ENCODE measurements at regions of chr4 and their contacts with region 1.

Region 1: GRCh38 chr4:76430519-76431388 is 4.3 kb upstream of the SHROOM3 start:
- DNase-seq: peak; percentile 50
- ATAC-seq: peak; percentile 81
- H3K4me3 ChIP-seq: peak overlapping the region in 1 of 2 experiments; percentile 41; a peak in 2 of 4 replicates
- H3K27ac ChIP-seq: no peak overlapping the region
- H3K4me1 ChIP-seq: peaks cover 0 to 9% of the 10 kb centered on the region in 2 experiments; a peak in 1 of 4 replicates
- H3K27me3 ChIP-seq: no peaks in the 10 kb centered on the region
- CTCF ChIP-seq: peak; percentile 55 to 87 (median 77)
- POLR2A ChIP-seq: no peak
- RAD21 ChIP-seq: peak; percentile 87

Region 2: DNA sequence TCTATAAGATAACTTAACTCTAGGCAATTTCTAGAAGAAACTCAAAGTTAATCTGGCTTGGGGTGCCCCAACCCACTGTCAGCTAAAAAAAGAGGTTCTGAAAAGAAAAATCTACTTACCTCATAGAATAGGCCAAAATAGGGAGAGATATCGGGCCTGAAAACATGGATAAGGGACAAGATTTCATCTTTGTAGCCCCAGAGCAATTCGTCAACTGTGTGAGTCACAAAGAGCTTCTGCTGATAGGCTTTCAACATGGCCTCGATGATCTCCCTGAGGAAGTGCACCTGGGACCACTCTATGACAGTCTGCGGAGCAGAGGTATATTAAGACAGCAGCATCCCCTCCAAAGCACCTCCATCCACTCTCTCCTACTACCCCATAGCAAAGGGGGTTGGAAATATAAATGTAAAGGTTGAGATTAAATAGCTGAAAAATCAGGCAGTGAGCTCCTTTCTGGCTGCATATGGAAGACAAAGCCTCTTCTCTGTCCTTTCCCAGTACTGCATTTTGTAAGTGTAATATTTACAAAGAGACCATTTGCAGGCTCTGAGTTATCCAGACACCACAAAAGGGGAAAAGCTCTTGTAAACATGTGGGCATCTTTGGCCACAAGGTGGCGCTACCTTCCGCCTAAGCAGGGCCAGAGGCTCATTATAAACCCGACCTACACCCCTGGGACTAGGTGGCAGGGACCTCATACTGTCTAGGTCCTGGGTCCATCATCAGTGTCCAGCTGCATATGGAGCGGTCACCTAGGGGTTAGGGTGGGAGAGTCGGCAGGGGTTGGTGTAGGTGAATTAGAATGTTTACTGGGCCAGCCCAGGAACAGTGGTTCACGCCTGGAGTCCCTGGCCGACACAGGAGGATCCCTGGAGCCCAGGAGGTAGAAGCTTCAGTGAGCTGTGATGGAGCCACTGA is 251.1 kb before region 1 on chr4:
- CTCF ChIA-PET with region 1: interaction called, 14 read pairs
- POLR2A ChIA-PET with region 1: no interaction called
- RAD21 ChIA-PET with region 1: no interaction called
- intact Hi-C with region 1: no loop called
- DNase-seq: peak; percentile 60
- ATAC-seq: peak; percentile 99
- H3K4me3 ChIP-seq: no peak overlapping the region
- H3K27ac ChIP-seq: no peak overlapping the region
- H3K4me1 ChIP-seq: no peaks in the 10 kb centered on the region
- H3K27me3 ChIP-seq: no peaks in the 10 kb centered on the region
- CTCF ChIP-seq: peak; percentile 74 to 93 (median 86)
- POLR2A ChIP-seq: no peak
- RAD21 ChIP-seq: peak; percentile 94

Region 3: GRCh38 chr4:76485450-76485849 is 54.7 kb after region 1 on chr4:
- CTCF ChIA-PET with region 1: no interaction called
- POLR2A ChIA-PET with region 1: no interaction called
- RAD21 ChIA-PET with region 1: no interaction called
- intact Hi-C with region 1: loop called (anchors 5 kb)
- DNase-seq: peak; percentile 62
- ATAC-seq: peak; percentile 98
- H3K4me3 ChIP-seq: peak overlapping the region in 1 of 2 experiments; percentile 9; a peak in 1 of 4 replicates
- H3K27ac ChIP-seq: no peak overlapping the region; the same call in 1 of the 2 replicates
- H3K4me1 ChIP-seq: peaks cover 7 to 17% of the 10 kb centered on the region in 2 experiments; a peak in 3 of 4 replicates
- H3K27me3 ChIP-seq: no peaks in the 10 kb centered on the region
- CTCF ChIP-seq: no peak
- POLR2A ChIP-seq: no peak
- RAD21 ChIP-seq: no peak

Region 4: DNA sequence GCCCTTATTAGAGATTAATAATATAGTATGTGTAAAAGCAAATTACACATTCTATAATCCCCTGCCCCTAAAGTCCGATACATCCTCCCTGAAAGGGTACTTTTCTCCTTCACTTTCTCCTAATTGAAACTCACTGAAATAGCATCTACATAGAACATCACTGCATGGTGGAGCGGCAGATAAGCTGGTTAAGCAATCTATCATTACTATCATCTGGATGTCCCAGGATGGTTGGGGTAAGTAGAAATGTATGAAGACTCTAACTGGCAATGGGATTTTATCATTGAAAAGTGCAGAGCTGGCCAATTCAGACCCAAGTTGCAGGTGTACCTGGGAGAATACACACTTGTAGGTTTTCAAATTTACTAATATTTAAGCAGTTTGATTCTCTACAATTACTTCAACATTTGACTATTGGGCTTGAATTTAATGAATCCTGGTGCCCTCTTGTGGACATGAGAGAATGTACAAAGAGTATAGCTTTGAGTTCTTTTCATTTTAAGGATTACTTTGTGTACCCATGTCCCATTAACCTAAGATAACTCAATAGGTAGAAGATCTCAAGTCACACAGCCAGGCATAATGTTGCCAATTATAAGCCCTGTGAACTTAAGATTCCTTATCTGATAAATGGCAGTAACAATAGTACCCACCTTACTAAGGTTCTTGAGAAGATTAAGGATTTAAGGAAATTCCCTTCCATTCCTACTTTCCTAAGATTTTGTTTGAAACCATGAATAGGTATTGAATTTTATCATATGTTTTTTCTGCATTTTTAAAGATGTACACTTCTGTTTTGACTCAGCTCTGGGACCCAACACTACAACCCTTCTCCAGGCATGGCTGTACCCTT is 74.1 kb after region 1 on chr4:
- CTCF ChIA-PET with region 1: interaction called, 125 read pairs
- POLR2A ChIA-PET with region 1: interaction called, 10 read pairs
- RAD21 ChIA-PET with region 1: interaction called, 12 to 13 read pairs
- intact Hi-C with region 1: loop called (anchors 1 kb)
- DNase-seq: peak; percentile 57
- ATAC-seq: peak; percentile 81
- H3K4me3 ChIP-seq: no peak overlapping the region
- H3K27ac ChIP-seq: no peak overlapping the region
- H3K4me1 ChIP-seq: no peaks in the 10 kb centered on the region
- H3K27me3 ChIP-seq: no peaks in the 10 kb centered on the region
- CTCF ChIP-seq: peak; percentile 51 to 79 (median 74); a peak in 5 of 6 replicates
- POLR2A ChIP-seq: no peak
- RAD21 ChIP-seq: peak; percentile 89

Region 5: DNA sequence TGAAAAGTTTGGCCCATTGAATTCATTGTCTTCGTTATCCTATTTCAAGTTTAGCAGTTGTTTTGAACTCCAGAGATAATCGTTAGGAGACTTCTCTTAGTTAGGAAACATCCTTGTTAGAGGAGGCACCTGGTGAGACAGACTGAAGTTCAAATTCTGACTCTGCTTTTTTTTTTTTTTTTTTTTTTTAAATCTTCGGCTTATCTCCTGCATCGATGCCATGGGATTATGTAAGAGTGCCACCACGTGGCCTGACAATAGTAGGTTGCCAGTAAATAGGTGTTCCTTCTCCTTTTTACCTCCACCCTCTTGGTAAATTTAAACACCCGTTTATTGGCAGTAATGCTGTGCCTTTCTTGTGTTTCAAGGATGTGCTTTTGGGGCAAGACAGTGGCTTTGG is 317.9 kb after region 1 on chr4:
- CTCF ChIA-PET with region 1: interaction called, 3 read pairs
- POLR2A ChIA-PET with region 1: no interaction called
- RAD21 ChIA-PET with region 1: no interaction called
- intact Hi-C with region 1: loop called (anchors 2 kb)
- DNase-seq: no peak
- ATAC-seq: peak; percentile 55
- H3K4me3 ChIP-seq: no peak overlapping the region
- H3K27ac ChIP-seq: no peak overlapping the region
- H3K4me1 ChIP-seq: peaks cover 12 to 30% of the 10 kb centered on the region in 2 experiments
- H3K27me3 ChIP-seq: no peaks in the 10 kb centered on the region
- CTCF ChIP-seq: peak; percentile 15 to 62 (median 56); a peak in 3 of 6 replicates
- POLR2A ChIP-seq: no peak
- RAD21 ChIP-seq: peak; percentile 82

Region 6: DNA sequence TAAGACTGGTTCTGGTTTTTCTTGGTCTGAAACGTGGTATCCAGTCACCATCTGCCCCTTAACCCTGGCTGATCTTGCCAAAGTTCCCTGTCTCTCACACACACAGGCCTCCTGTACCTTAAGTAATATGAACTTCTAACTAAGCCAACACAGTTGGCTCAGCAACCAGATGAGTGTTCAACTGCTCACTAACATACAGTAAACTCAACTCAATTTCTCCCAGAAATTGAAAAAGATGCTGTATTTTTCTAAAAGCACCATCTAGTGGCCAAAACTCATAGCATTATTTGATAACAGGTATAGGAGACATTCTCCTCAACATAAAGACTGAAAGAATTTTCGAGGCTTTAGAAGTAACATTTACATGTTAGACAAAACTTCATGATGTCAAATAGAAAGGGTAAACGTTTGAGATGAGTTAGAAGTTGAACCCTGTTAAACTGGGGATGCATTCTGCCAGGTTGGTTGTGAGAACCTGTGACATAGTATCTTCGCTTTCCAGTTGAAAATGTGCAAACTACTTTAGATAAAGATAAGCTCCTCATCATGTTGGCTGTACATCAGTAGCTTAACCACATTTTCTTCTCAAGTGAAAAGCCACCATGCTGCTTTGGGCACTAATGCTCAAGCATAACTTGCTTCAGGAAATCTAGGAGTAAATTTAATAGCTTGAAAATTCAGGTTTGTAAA is 613.9 kb after region 1 on chr4:
- CTCF ChIA-PET with region 1: no interaction called
- POLR2A ChIA-PET with region 1: no interaction called
- RAD21 ChIA-PET with region 1: no interaction called
- intact Hi-C with region 1: loop called (anchors 5 kb)
- DNase-seq: no peak
- ATAC-seq: peak; percentile 63
- H3K4me3 ChIP-seq: no peak overlapping the region
- H3K27ac ChIP-seq: no peak overlapping the region
- H3K4me1 ChIP-seq: no peaks in the 10 kb centered on the region
- H3K27me3 ChIP-seq: no peaks in the 10 kb centered on the region
- CTCF ChIP-seq: peak; percentile 48 to 80 (median 63); a peak in 5 of 6 replicates
- POLR2A ChIP-seq: no peak
- RAD21 ChIP-seq: peak; percentile 62

Region 7: GRCh38 chr4:77203380-77204197 is 772.8 kb after region 1 on chr4:
- CTCF ChIA-PET with region 1: interaction called, 4 read pairs
- POLR2A ChIA-PET with region 1: no interaction called
- RAD21 ChIA-PET with region 1: no interaction called
- intact Hi-C with region 1: loop called (anchors 5 kb)
- DNase-seq: peak; percentile 75
- ATAC-seq: peak; percentile 93
- H3K4me3 ChIP-seq: no peak overlapping the region
- H3K27ac ChIP-seq: no peak overlapping the region
- H3K4me1 ChIP-seq: peaks cover 0 to 12% of the 10 kb centered on the region in 2 experiments; a peak in 1 of 4 replicates
- H3K27me3 ChIP-seq: no peaks in the 10 kb centered on the region
- CTCF ChIP-seq: peak; percentile 76 to 84 (median 84)
- POLR2A ChIP-seq: no peak
- RAD21 ChIP-seq: peak; percentile 95

Measured in HCT116 (cell line).